ENCODE measurements at regions of chr4 and their contacts with region 1.

Region 1: DNA sequence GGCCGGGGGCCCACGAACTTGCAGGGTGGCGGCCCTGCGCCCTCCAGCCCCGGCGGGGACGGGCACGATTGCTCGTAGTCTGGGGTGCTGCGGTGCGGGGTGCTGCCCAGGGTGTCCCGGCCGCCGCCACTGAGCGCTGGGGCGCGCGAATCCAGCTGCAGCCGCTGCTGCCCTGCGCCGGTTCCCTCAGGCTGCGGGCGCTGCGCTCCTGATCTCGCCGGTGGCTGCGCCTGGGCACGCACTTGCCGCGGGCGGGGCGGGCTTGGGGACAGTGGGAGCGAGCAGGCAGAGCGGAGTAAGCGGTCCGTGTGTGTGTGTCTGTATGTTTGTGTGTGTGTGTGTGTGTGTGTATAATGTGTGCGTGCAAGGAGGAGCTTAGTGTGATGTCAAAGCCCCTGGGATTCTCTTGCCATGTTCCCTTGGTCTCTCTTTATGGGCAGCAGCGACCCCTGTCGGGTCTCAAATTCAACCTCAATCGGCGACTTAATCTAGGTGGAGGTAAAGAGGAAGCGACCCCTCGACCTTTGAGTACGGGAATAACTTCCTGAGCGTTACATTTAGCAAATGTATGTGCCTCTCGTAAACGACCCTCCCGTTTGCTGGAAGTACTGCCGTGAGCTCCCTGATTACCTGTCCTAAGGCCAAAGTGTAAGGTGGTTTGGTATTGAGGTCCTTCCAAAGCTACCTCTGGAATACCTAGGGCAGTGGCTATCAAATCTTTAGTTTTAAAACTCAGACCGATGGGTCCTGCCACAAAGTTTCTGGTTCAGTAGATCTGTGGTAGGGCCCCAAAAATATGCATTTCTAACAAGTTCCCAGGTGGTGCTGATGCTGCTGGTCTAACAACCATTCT is at the start of gene RNF150:
- DNase-seq: peak; percentile 92
- ATAC-seq: peak; percentile 76
- H3K4me3 ChIP-seq: peak within 1 kb of the TSS; percentile 97
- H3K27ac ChIP-seq: peak within 1 kb of the TSS; percentile 40; the same call in 1 of the 2 replicates
- H3K4me1 ChIP-seq: peaks cover 2% of the 10 kb centered on the region
- H3K27me3 ChIP-seq: 0 out of 2 replicates have a peak, but pooled peaks cover 2% of the 10 kb centered on the region
- CTCF ChIP-seq: peak; percentile 90
- POLR2A ChIP-seq: no peak
- RAD21 ChIP-seq: peak; percentile 94
- total RNA-seq, gene RNF150: 10.6 and 18.1 TPM in 2 replicates

Region 2: DNA sequence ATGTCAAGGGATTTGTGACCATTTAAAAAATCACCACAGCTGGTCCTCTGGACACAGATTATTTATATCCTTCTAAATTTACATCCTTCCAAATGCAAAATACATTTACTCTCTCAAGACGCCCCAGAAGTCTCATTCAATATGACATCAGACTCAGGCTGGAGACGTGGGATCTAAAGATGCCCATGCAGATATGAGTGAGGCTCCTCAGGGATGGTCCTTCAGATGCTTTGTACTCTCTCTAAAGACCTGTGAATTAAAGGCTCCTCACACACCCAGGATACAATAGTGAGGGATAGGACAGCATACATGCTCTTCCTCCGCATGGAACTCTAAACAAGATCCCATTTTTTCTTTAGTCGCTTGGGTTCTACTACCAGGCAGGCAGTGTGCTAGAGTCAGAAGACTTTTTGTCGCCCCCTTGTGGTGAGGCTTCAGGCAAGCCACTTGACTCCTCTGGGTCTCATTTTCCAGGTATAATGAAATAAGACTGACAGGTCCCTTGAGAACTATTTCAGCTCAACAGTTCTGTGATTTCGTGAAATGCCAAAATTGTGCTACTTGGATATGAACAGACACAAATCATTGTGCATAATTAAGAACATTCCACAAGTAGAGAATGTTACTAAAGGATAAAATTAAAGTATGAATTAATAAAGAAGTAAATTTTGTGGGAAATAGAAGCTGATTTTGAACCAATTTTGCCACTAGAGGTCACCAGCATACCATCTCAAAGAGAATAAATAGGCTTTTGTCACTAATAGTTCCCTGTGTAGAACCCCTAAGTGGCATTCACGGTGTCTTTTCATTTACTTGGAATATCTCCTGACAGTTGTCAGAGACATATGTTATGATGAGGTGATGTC is 773.6 kb before region 1 on chr4:
- CTCF ChIA-PET with region 1: no interaction called
- POLR2A ChIA-PET with region 1: no interaction called
- dilution Hi-C with region 1: no loop called
- in situ Hi-C with region 1: loop called (anchors 25 kb)
- intact Hi-C with region 1: no loop called
- DNase-seq: peak; percentile 81
- ATAC-seq: peak; percentile 89
- H3K4me3 ChIP-seq: no peak overlapping the region
- H3K27ac ChIP-seq: no peak overlapping the region
- H3K4me1 ChIP-seq: no peaks in the 10 kb centered on the region; the same call in 1 of the 2 replicates
- H3K27me3 ChIP-seq: peaks cover 12% of the 10 kb centered on the region
- CTCF ChIP-seq: peak; percentile 64
- POLR2A ChIP-seq: no peak
- RAD21 ChIP-seq: peak; percentile 61

Region 3: DNA sequence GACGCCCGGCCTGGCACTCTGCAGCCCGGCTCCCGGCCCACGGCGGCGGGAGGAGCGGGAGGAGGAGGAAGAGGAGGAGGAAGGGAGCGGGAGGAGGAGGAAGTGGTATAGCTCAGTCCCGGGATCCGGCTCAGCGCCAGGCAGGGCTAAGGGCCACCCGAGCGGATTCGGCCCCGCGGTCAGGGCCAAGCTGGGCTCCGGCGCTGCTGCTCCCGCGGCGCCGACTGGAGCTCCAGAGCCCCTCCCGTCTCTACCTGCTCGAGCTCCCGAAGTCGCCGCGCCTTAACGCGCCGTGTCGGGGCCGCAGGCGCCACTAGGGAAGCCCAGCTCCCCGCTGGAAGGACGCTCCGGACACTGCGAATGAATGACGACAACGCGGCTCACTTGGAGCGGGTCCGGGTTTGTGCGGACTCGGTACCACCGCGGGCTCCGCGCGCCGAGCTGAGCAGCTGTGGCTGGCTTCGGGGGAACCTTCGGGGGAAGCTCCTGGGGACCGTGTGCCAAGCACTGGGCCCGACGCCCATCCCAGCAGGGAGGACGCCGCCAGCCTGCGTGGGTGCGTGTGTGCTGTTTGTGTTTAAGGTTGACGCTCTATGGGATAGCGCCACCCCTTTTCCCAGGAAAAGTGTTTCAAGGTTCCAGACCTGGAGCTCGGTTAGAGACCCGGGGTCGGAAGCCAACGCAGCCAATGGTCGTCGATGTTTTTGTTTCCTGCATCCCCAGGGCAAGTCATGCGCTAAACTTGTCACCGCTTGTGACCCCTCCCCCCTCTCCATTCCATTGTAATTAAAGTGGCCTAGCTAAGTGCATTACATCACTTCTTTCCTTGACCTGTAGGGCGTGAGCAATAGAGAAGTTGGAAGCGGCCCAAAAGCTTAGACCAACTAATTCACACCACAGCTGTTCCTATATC is 376.8 kb before region 1 on chr4 and contains the start of gene TBC1D9:
- CTCF ChIA-PET with region 1: no interaction called
- POLR2A ChIA-PET with region 1: no interaction called
- dilution Hi-C with region 1: no loop called
- in situ Hi-C with region 1: no loop called
- intact Hi-C with region 1: loop called (anchors 5 kb)
- DNase-seq: peak; percentile 55
- ATAC-seq: peak; percentile 80
- H3K4me3 ChIP-seq: peak within 1 kb of the TSS; percentile 89
- H3K27ac ChIP-seq: peak within 1 kb of the TSS; percentile 75
- H3K4me1 ChIP-seq: no peaks in the 10 kb centered on the region
- H3K27me3 ChIP-seq: no peaks in the 10 kb centered on the region
- CTCF ChIP-seq: no peak
- POLR2A ChIP-seq: no peak
- RAD21 ChIP-seq: no peak
- total RNA-seq, gene TBC1D9: 15.2 and 16.9 TPM in 2 replicates

Region 4: DNA sequence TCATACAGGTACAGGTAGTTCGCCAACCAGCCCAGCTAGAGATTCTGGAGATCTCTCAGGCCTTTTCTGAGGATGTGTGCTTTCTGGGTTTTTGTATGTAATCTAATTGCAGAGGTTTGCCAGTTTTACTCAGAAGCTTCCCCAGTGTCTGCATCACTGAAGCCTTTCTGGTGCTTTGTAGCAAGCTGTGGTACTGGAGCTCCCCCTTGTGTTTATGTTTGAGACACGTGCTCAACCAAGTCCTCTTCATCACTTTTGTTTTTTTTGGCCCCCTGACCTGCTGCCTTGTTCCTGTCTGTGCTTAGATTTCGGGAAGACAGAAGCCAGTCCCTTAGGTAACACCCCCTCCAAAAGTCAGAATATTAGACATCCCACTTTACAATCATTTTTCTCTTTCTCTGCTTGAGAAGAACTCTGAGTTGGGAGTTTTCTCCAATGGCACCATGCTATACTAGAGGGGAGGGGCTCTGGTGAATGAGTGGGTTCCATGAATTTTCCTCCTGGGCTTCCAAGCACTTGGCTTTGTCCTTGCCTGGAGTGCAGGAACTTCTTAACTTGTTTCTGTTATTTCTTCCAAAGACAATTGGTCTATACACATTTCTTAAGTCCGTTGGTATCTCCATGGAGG is 248.8 kb before region 1 on chr4:
- CTCF ChIA-PET with region 1: interaction called, 8 read pairs
- POLR2A ChIA-PET with region 1: no interaction called
- dilution Hi-C with region 1: loop called (anchors 25 kb)
- in situ Hi-C with region 1: no loop called
- intact Hi-C with region 1: loop called (anchors 1 kb)
- DNase-seq: peak; percentile 80
- ATAC-seq: peak; percentile 95
- H3K4me3 ChIP-seq: no peak overlapping the region
- H3K27ac ChIP-seq: no peak overlapping the region
- H3K4me1 ChIP-seq: no peaks in the 10 kb centered on the region
- H3K27me3 ChIP-seq: no peaks in the 10 kb centered on the region
- CTCF ChIP-seq: peak; percentile 68
- POLR2A ChIP-seq: no peak
- RAD21 ChIP-seq: peak; percentile 72

Region 5: DNA sequence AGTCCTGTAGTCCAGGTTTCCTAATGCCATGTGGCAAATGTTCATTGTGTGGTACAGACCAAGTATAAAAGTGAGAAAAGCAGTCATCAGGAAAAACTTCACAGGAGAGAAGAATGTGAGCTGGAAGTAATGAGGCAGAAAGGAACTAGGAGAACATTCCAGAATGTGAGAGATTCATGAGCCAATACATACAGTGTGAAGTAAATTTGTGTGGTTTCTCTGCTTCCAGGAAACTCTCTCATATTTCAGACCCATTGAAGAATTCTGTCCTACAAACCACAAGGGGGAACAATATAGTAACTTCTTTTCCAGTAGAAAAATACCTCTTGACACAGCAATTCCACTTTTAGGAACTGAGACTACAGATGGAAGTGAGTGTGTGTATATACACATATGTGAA is 136.6 kb before region 1 on chr4:
- CTCF ChIA-PET with region 1: interaction called, 5 read pairs
- POLR2A ChIA-PET with region 1: no interaction called
- dilution Hi-C with region 1: no loop called
- in situ Hi-C with region 1: no loop called
- intact Hi-C with region 1: loop called (anchors 1 kb)
- DNase-seq: peak; percentile 78
- ATAC-seq: peak; percentile 86
- H3K4me3 ChIP-seq: no peak overlapping the region
- H3K27ac ChIP-seq: no peak overlapping the region
- H3K4me1 ChIP-seq: peaks cover 2% of the 10 kb centered on the region; the same call in 1 of the 2 replicates
- H3K27me3 ChIP-seq: no peaks in the 10 kb centered on the region
- CTCF ChIP-seq: peak; percentile 48
- POLR2A ChIP-seq: no peak
- RAD21 ChIP-seq: peak; percentile 48

Region 6: GRCh38 chr4:142065086-142065647 is 931.8 kb after region 1 on chr4:
- CTCF ChIA-PET with region 1: no interaction called
- POLR2A ChIA-PET with region 1: no interaction called
- dilution Hi-C with region 1: no loop called
- in situ Hi-C with region 1: no loop called
- intact Hi-C with region 1: no loop called
- DNase-seq: peak; percentile 31
- ATAC-seq: no peak
- H3K4me3 ChIP-seq: no peak overlapping the region
- H3K27ac ChIP-seq: no peak overlapping the region
- H3K4me1 ChIP-seq: no peaks in the 10 kb centered on the region
- H3K27me3 ChIP-seq: no peaks in the 10 kb centered on the region
- CTCF ChIP-seq: no peak
- POLR2A ChIP-seq: no peak
- RAD21 ChIP-seq: no peak

Measured in IMR-90 (cell line).